A673 (cell line): ENCODE measurements at regions of chr1 and their contacts with region 1.

Region 1: GRCh38 chr1:84944767-84945486 is 51.9 kb upstream of the LPAR3 start:
- DNase-seq: peak; percentile 95
- H3K4me3 ChIP-seq: peak overlapping the region; percentile 20
- H3K27ac ChIP-seq: no peak overlapping the region
- H3K4me1 ChIP-seq: peaks cover 7% of the 10 kb centered on the region
- H3K27me3 ChIP-seq: no peaks in the 10 kb centered on the region
- CTCF ChIP-seq: peak; percentile 98

Region 2: DNA sequence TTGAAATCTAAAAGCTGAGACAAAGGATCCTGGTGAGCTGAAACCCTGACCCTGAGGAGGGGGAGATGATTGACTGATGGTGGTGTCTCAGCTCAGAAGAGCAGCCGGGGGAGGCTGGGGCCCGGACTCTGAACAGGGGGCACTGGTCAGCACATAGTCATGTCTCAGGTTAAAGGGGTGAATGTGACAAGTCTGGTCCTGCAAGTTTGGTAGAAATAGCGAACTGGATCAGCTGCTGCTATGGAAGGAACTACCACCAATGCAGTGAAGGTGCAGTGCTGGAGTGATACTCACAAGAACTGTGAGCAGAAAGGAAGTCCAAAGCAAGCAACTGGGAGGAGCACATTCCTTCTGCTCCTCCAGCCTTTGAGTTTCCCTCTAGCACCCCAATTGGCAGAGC is 155.9 kb before region 1 on chr1:
- CTCF ChIA-PET with region 1: no interaction called
- POLR2A ChIA-PET with region 1: no interaction called
- intact Hi-C with region 1: no loop called
- DNase-seq: no peak
- H3K4me3 ChIP-seq: no peak overlapping the region
- H3K27ac ChIP-seq: no peak overlapping the region
- H3K4me1 ChIP-seq: no peaks in the 10 kb centered on the region
- H3K27me3 ChIP-seq: peaks cover 26% of the 10 kb centered on the region
- CTCF ChIP-seq: no peak

Region 3: DNA sequence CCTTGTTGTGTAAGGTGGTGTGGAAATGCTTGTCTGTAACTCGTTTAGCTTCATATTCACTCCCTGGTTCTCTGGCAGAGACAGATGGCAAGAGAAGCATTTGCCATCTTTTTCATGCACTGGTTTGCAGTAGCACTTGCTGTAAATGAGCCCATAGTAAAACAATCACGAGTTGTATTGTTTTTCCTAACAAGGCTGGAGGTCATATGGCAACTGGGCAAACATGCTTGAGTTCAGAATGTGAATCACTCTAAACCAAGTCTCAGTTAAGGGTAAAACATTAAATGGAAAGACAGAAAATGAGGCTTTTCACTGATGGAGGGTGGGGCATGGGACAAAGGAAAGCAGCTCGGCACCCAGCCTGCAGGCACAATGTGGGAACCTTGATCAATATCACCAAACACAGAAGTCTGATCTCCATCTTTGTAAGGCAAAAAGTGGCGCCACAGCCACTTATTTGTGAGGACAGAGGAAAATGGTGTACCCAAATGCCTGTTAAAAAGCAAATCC is 25.4 kb before region 1 on chr1:
- CTCF ChIA-PET with region 1: no interaction called
- POLR2A ChIA-PET with region 1: no interaction called
- intact Hi-C with region 1: no loop called
- DNase-seq: no peak
- H3K4me3 ChIP-seq: no peak overlapping the region
- H3K27ac ChIP-seq: no peak overlapping the region
- H3K4me1 ChIP-seq: no peaks in the 10 kb centered on the region
- H3K27me3 ChIP-seq: no peaks in the 10 kb centered on the region
- CTCF ChIP-seq: no peak

Region 4: GRCh38 chr1:85027242-85027983 is 82.5 kb after region 1 on chr1:
- CTCF ChIA-PET with region 1: interaction called, 32 read pairs
- POLR2A ChIA-PET with region 1: no interaction called
- intact Hi-C with region 1: loop called (anchors 1 kb)
- DNase-seq: peak; percentile 32
- H3K4me3 ChIP-seq: no peak overlapping the region
- H3K27ac ChIP-seq: no peak overlapping the region
- H3K4me1 ChIP-seq: no peaks in the 10 kb centered on the region
- H3K27me3 ChIP-seq: no peaks in the 10 kb centered on the region
- CTCF ChIP-seq: peak; percentile 35

Region 5: GRCh38 chr1:85078903-85079302 is 134.0 kb after region 1 on chr1:
- CTCF ChIA-PET with region 1: interaction called, 24 read pairs
- POLR2A ChIA-PET with region 1: no interaction called
- intact Hi-C with region 1: loop called (anchors 2 kb)
- DNase-seq: peak; percentile 47
- H3K4me3 ChIP-seq: no peak overlapping the region
- H3K27ac ChIP-seq: no peak overlapping the region
- H3K4me1 ChIP-seq: no peaks in the 10 kb centered on the region
- H3K27me3 ChIP-seq: no peaks in the 10 kb centered on the region
- CTCF ChIP-seq: peak; percentile 47

Region 6: DNA sequence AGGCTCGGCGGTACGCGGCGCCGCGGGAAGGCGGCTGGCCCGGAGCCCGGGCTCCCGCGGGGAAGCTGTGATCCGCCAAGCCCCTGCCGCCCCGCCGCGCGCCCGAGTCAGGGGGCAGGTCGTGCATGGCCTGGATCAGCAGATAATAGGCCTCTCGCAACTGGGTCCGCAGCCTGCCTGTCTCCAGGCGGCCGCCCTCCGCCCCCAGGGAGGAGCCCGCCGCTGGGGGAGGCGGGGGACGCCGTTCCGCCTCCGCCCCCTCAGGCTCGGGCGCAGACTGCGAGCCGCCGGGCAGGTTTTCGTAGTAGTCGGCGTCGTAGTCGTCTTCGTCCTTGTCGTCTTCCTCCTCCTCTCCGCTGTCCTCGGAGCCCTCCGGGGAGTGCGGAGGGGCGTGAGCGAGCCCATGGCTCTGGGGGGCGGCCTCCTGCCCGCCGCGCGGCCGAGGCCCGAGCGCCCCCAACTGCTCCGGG is 256.0 kb after region 1 on chr1 and contains the start of gene SYDE2:
- CTCF ChIA-PET with region 1: no interaction called
- POLR2A ChIA-PET with region 1: no interaction called
- intact Hi-C with region 1: loop called (anchors 1 kb)
- DNase-seq: peak; percentile 87
- H3K4me3 ChIP-seq: peak within 1 kb of the TSS; percentile 92
- H3K27ac ChIP-seq: peak within 1 kb of the TSS; percentile 97
- H3K4me1 ChIP-seq: peaks cover 29% of the 10 kb centered on the region
- H3K27me3 ChIP-seq: no peaks in the 10 kb centered on the region
- CTCF ChIP-seq: no peak
- total RNA-seq, gene SYDE2: 10.4 and 10.9 TPM in 2 replicates

Region 7: DNA sequence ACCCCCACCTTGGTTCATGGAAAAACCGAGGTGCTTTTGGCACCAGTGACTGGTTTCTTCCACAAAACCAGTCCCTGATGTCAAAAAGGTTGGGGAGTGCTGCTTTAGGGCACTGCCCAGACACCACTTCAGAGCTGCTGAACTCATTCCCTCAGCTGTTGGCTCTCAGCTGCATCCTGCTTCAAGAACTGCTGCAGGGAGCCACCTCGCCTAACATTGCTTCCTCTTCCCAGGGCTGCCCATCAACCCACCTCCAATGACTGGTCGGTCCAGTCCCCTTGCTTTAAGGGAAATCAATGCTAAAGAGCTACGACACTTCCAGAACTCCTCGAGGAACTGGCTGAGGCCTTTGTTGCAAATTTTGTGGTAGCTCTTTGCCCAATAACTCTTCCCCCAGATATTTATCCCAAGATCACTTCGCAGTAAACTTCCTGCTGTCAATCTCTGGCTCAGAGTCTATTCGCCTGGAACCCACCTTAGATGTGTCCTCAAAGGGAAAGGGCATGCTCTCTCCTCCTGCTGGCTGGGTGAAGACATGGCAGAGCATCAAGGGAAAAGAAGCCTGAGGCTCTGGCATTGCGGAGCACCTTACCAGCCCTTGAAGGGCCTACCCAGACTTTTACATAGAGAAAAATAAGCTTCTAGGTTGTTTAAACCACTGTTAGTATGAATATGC is 285.5 kb after region 1 on chr1:
- CTCF ChIA-PET with region 1: interaction called, 13 read pairs
- POLR2A ChIA-PET with region 1: no interaction called
- intact Hi-C with region 1: no loop called
- DNase-seq: peak; percentile 36
- H3K4me3 ChIP-seq: no peak overlapping the region
- H3K27ac ChIP-seq: no peak overlapping the region
- H3K4me1 ChIP-seq: peaks cover 17% of the 10 kb centered on the region
- H3K27me3 ChIP-seq: no peaks in the 10 kb centered on the region
- CTCF ChIP-seq: peak; percentile 50

Region 8: DNA sequence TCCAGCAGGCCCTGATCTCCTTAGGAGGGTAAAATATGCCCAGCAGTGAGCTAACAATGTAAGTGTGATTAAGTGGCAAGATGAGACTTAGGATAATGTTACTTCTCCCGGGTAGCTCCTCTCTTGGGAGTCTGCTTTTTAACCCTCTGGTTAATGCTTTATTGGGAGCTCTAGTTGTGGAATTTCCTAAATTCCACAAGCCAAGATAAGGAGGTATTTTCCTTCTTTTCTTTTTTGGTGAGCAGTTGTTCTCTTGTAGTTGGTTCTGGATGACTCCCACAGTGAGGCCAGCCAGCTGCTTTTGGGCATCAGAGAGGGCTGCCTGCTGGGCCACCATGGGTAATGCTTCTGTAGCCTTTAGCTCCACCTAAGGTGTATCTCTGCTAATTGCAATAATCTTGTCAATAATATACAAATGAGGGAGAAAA is 295.3 kb after region 1 on chr1:
- CTCF ChIA-PET with region 1: interaction called, 12 read pairs
- POLR2A ChIA-PET with region 1: no interaction called
- intact Hi-C with region 1: no loop called
- DNase-seq: peak; percentile 84
- H3K4me3 ChIP-seq: no peak overlapping the region
- H3K27ac ChIP-seq: peak overlapping the region; percentile 49
- H3K4me1 ChIP-seq: peaks cover 40% of the 10 kb centered on the region
- H3K27me3 ChIP-seq: no peaks in the 10 kb centered on the region
- CTCF ChIP-seq: peak; percentile 46

Region 9: DNA sequence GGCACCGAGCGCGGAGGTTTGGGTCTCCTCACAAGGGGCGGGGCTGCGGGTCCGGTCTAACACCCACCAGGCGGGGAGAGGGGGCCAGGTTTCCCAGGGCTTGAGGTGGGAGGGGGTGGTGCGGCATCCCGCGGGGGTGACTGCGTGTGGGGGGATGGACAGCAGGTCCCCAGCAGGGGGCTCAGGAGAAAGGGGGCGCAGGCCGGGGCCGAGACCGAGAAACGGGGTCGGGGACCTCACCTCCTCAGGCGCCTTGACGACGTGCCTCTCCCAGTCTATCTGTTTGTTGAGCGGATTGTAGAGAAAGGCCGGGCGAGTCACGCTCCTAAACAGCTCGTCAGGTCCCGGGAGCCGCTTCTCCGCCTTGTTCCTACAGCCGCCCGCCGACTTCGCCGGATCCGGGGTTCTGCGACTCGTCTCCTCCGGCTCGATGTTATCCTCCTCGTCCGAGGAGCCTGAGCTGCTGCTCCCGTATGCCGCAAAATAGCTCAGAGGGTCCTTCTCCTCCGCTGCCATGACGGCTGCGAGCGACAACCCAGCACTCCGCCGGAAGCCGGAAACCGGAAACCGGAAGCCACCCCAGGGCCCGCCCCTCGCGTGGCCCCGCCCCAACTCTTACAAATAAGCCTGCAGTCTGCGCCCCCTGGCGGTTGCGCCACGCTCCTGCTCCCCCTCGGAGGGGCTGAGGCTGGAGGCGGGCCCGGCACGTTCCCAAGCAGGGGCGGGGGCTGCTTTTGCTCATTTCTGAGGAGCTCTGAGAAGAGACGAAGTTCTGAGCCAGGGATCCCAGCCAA is 314.4 kb after region 1 on chr1 and contains the start of gene C1orf52:
- CTCF ChIA-PET with region 1: interaction called, 65 read pairs
- POLR2A ChIA-PET with region 1: no interaction called
- intact Hi-C with region 1: loop called (anchors 1 kb)
- DNase-seq: peak; percentile 96
- H3K4me3 ChIP-seq: peak within 1 kb of the TSS; percentile 78
- H3K27ac ChIP-seq: peak within 1 kb of the TSS; percentile 73
- H3K4me1 ChIP-seq: peaks cover 8% of the 10 kb centered on the region
- H3K27me3 ChIP-seq: no peaks in the 10 kb centered on the region
- CTCF ChIP-seq: peak; percentile 99
- total RNA-seq, gene C1orf52: 30.2 and 31.9 TPM in 2 replicates